ENCODE measurements at regions of chr10 and their contacts with region 1.

Region 1: GRCh38 chr10:70758757-70759514 is 26.2 kb downstream of the TBATA start:
- DNase-seq: peak; percentile 51 to 95 (median 84)

Region 2: GRCh38 chr10:70549962-70550458 is 208.9 kb before region 1 on chr10:
- intact Hi-C with region 1: loop called (anchors 2 kb)
- DNase-seq: peak in 41 of 42 donors; percentile 42 to 90 (median 75)

Region 3: GRCh38 chr10:70774810-70775678 is 16.1 kb after region 1 on chr10:
- intact Hi-C with region 1: no loop called
- DNase-seq: peak in 10 of 42 donors; percentile 2 to 38 (median 12)

Region 4: DNA sequence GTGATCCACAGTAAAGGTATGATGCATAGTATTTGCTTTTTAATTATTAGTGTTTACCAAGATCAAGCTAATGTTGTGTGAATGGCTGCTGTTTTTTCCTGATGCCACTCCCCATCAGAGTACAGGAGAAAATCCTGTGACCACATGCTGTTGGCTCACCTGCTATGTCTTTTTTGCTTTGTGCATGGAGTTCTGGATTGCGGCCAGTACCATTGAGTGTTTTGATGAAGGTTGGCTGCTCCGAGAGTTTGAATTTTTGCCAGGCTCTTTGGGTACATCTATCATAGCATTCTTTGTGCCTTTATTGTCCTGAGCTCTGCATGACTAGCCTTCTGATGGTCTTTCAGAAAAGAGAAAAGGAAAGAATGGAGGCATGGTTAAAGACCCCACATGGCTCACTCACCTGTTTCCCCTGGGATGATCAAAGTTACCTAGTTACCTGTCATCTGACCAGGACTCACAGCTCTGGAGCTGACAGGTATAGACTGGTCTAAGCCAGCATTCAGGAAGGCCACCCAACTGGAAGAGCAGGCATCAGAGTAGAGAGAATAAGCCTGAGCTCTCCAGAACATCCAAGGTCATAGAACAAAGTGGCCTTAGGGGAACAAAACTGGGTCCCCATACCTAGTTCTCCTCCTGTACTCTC is 45.0 kb after region 1 on chr10:
- intact Hi-C with region 1: no loop called
- DNase-seq: no peak

Region 5: DNA sequence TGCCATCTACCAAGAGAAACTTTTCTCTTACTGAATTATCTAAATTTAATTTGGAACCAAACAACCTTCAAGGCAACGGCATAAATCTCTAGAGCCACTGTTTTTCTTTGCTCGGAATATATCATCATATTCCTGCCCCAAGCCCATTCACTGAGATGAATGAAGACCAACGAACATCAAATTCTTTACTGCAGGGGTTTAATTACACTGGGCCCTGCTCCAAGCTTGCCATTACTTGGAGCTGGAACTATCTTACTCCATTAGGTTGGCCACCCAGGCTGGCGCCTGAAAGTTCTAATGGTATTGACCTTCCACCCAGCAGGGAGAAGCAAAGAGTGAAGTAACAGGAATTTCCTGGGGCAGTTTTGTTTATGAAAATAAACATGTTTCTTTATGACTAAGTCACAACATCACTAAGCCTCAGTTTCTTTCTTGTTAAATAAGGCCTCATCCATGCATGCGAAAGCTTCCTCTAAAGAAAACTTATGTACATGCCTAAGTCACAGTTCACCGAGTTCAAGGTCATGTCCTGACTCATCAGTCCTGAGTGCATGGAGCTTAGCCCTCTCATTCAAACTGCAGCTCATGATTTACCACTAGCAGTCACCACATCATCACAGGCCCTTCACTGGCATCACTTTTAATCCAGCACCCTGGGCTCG is 1414.8 kb after region 1 on chr10:
- intact Hi-C with region 1: no loop called
- DNase-seq: no peak